ENCODE measurements at regions of chr1 and their contacts with region 1.

Region 1: GRCh38 chr1:68777851-68778250 is 281.0 kb upstream of the DEPDC1 start:
- DNase-seq: no peak
- H3K4me3 ChIP-seq: no peak overlapping the region
- H3K27ac ChIP-seq: no peak overlapping the region
- H3K4me1 ChIP-seq: peaks cover 4% of the 10 kb centered on the region
- H3K27me3 ChIP-seq: no peaks in the 10 kb centered on the region
- CTCF ChIP-seq: no peak
- POLR2A ChIP-seq: no peak

Region 2: GRCh38 chr1:68516066-68516465 is 261.8 kb before region 1 on chr1:
- intact Hi-C with region 1: no loop called
- DNase-seq: no peak
- H3K4me3 ChIP-seq: no peak overlapping the region
- H3K27ac ChIP-seq: no peak overlapping the region
- H3K4me1 ChIP-seq: no peaks in the 10 kb centered on the region
- H3K27me3 ChIP-seq: no peaks in the 10 kb centered on the region
- CTCF ChIP-seq: no peak
- POLR2A ChIP-seq: no peak

Region 3: DNA sequence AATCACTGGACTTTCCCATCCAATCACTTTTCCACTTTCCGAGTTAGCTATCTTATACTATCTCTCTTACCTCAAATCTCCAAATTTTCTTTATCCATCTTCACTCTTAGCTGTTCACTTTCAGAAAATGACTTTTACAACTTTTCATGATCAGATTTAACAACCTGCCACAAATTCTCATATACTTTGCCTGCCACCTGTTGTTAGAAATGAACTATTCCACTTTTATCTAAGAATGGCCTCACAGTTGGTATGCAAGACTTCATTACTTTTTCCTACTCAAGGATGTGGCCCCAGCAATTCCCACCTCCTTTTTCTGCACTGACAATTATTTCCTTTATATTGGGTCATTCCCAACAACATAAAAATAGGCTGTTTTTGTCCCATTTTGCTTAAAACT is 187.4 kb before region 1 on chr1:
- intact Hi-C with region 1: no loop called
- DNase-seq: no peak
- H3K4me3 ChIP-seq: no peak overlapping the region
- H3K27ac ChIP-seq: no peak overlapping the region
- H3K4me1 ChIP-seq: no peaks in the 10 kb centered on the region
- H3K27me3 ChIP-seq: no peaks in the 10 kb centered on the region
- CTCF ChIP-seq: no peak
- POLR2A ChIP-seq: no peak

Region 4: DNA sequence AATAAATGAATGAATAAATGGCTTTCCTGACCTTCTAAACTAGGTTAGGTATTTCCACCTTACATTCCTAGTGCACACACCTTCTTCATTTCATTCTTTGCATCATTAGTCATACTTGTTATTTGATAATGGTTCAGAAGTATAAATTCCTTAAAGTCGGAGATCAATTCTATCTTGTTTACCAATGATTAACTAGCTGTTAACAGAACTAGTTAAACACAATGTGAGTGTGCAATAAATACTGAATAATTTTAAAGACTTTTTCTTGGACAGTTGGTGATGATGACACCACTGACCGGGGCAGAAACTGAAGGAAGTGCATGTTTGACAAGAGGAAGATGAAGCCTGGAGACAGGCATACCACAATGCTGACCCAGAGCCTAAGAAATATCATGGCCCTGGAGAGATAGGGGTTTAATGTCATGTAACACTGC is 73.9 kb before region 1 on chr1:
- intact Hi-C with region 1: no loop called
- DNase-seq: no peak
- H3K4me3 ChIP-seq: no peak overlapping the region
- H3K27ac ChIP-seq: no peak overlapping the region
- H3K4me1 ChIP-seq: no peaks in the 10 kb centered on the region
- H3K27me3 ChIP-seq: no peaks in the 10 kb centered on the region
- CTCF ChIP-seq: no peak
- POLR2A ChIP-seq: no peak

Region 5: DNA sequence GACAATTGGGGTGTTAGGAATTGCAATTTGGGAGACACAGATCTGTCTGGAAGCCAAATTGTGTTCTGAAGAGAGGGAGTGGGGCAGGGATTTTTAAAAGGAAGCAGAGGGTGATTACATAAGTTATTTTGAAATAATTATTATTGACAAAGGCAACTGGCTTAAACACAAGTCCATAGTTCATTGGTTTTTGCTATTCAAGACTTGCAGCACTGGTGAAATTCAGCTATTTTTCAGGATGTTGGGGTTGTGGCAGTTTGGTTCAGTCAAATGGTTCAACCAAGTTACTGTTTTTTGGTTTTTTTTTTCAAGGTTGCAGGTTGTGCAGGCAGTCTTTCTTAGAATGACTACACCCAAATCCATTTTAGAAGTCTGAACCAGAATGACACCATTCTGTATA is 19.0 kb after region 1 on chr1:
- intact Hi-C with region 1: loop called (anchors 1 kb)
- DNase-seq: no peak
- H3K4me3 ChIP-seq: no peak overlapping the region
- H3K27ac ChIP-seq: no peak overlapping the region
- H3K4me1 ChIP-seq: peaks cover 8% of the 10 kb centered on the region
- H3K27me3 ChIP-seq: no peaks in the 10 kb centered on the region
- CTCF ChIP-seq: no peak
- POLR2A ChIP-seq: no peak